CD14-positive monocyte (primary cell): ENCODE measurements at regions of chr11 and their contacts with region 1.

Region 1: DNA sequence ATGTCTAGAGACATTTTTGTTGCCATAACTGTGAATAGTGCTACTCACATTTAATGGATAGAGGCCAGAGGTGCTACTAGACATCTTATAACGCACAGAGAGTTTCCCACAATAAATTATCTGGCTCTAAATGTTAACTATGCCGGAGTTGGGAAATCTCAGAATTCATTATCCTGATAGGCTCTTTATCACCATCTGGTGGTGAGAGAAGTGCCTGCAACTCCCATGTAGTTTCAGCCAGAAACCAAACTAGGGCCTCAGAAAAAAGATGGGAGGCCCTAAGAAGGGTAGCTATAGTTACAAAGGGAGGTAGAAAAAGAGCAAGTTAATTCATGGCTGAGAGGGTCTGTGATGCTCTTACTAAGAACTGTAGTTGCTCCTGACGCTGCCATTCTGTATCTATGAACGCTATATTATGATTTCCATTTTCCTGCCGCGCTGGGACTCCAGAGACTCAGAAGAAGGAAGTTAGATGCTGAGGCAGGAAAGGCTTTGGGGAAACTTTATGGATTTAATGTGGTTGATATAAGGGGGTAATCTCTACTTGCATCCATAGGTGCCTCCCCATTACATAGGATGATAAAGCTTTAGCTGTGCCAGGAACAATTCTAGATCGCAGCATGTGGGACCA is 22.9 kb upstream of the MRPL17 start:
- DNase-seq: peak in 2 of 3 donors; percentile 45 to 56
- H3K4me3 ChIP-seq: no peak overlapping the region
- H3K4me3 Mint-ChIP-seq: no peak overlapping the region
- H3K27ac ChIP-seq: no peak overlapping the region
- H3K27ac Mint-ChIP-seq: no peak overlapping the region
- H3K4me1 ChIP-seq: peaks cover 6 to 7% of the 10 kb centered on the region in 2 donors
- H3K4me1 Mint-ChIP-seq: peaks cover 7% of the 10 kb centered on the region
- H3K27me3 ChIP-seq: no peaks in the 10 kb centered on the region
- H3K27me3 Mint-ChIP-seq: peaks cover 0 to 4% (median 0%) of the 10 kb centered on the region in 3 donors
- CTCF ChIP-seq: peak; percentile 98

Region 2: GRCh38 chr11:6531267-6531752 is 174.7 kb before region 1 on chr11:
- intact Hi-C with region 1: loop called in 1 of 2 experiments (anchors 5 kb)
- DNase-seq: peak; percentile 25 to 48 (median 46)
- H3K4me3 ChIP-seq: no peak overlapping the region
- H3K4me3 Mint-ChIP-seq: no peak overlapping the region
- H3K27ac ChIP-seq: no peak overlapping the region
- H3K27ac Mint-ChIP-seq: no peak overlapping the region
- H3K4me1 ChIP-seq: no peaks in the 10 kb centered on the region
- H3K4me1 Mint-ChIP-seq: peaks cover 4% of the 10 kb centered on the region
- H3K27me3 ChIP-seq: no peaks in the 10 kb centered on the region
- H3K27me3 Mint-ChIP-seq: no peaks in the 10 kb centered on the region
- CTCF ChIP-seq: peak; percentile 90

Region 3: GRCh38 chr11:6757373-6757967 is 51.5 kb after region 1 on chr11:
- intact Hi-C with region 1: loop called (anchors 5 to 10 kb)
- DNase-seq: peak; percentile 43 to 61 (median 50)
- H3K4me3 ChIP-seq: no peak overlapping the region
- H3K4me3 Mint-ChIP-seq: no peak overlapping the region
- H3K27ac ChIP-seq: no peak overlapping the region
- H3K27ac Mint-ChIP-seq: no peak overlapping the region
- H3K4me1 ChIP-seq: no peaks in the 10 kb centered on the region
- H3K4me1 Mint-ChIP-seq: no peaks in the 10 kb centered on the region
- H3K27me3 ChIP-seq: no peaks in the 10 kb centered on the region
- H3K27me3 Mint-ChIP-seq: peaks cover 0 to 3% (median 0%) of the 10 kb centered on the region in 3 donors
- CTCF ChIP-seq: peak; percentile 82